ENCODE measurements at regions of chr12 and their contacts with region 1.

Region 1: GRCh38 chr12:9813821-9814809 is 13.2 kb upstream of the KLRF1 start:
- DNase-seq: peak; percentile 74 to 79 (median 79)
- H3K4me3 ChIP-seq: peak overlapping the region; percentile 36 to 77 (median 50)
- H3K4me3 Mint-ChIP-seq: peak overlapping the region; percentile 79 to 89
- H3K27ac ChIP-seq: peak overlapping the region; percentile 50
- H3K27ac Mint-ChIP-seq: peak overlapping the region; percentile 17 to 85 (median 73)
- H3K4me1 ChIP-seq: peaks cover 32 to 43% of the 10 kb centered on the region in 2 donors
- H3K4me1 Mint-ChIP-seq: peaks cover 34% of the 10 kb centered on the region
- H3K27me3 ChIP-seq: no peaks in the 10 kb centered on the region
- H3K27me3 Mint-ChIP-seq: peaks cover 0 to 4% (median 0%) of the 10 kb centered on the region in 3 donors
- CTCF ChIP-seq: peak; percentile 95

Region 2: GRCh38 chr12:9750276-9751203 is 63.6 kb before region 1 on chr12:
- intact Hi-C with region 1: loop called in 1 of 2 experiments (anchors 5 kb)
- DNase-seq: peak; percentile 58 to 78 (median 78)
- H3K4me3 ChIP-seq: peak overlapping the region in 2 of 3 experiments; percentile 11 to 45
- H3K4me3 Mint-ChIP-seq: peak overlapping the region; percentile 27 to 60
- H3K27ac ChIP-seq: no peak overlapping the region
- H3K27ac Mint-ChIP-seq: peak overlapping the region in 3 of 7 donors; percentile 27 to 70 (median 68)
- H3K4me1 ChIP-seq: peaks cover 4 to 13% of the 10 kb centered on the region in 2 donors
- H3K4me1 Mint-ChIP-seq: peaks cover 14% of the 10 kb centered on the region
- H3K27me3 ChIP-seq: no peaks in the 10 kb centered on the region
- H3K27me3 Mint-ChIP-seq: peaks cover 0 to 1% (median 0%) of the 10 kb centered on the region in 3 donors
- CTCF ChIP-seq: peak; percentile 94

Region 3: DNA sequence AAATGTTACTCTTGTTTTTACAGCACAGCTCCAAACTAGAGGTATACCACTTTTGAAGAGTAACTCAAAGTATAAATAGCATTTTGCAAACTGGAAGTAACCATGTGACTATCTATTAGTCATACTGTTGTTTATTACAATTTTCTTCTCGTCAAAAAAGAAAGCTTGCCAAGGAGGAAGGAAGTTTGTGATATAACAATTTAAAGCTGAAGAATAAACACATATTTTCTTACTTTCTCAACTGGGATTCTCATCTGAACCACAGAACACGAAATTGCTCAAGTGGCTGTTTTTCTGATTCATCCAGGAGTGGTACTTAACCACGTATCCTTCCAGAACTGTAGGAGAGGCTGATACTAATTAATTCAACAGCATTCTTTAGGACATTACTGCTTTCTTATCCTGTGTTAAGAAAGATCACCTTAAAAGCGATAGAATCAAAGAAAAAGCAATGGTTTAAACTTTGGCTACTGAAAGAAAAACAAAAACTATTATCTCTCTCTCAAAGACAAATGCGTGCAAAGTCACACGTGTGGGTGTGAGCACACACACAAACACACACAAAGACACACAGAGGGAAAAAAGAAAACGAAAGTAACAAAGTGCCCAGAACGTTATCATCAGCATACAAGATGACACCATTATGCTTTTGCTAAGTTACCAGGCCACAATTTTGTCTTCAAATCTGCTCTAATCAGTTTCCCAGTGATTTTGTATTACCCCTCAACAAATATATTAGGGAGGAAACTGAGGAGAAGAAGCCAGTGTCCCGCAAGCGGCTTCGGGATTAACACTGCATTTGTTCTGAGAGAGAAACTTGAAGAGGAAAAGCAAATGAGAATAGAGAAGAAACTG is 55.4 kb after region 1 on chr12 and contains the start of gene CLEC2B:
- intact Hi-C with region 1: loop called in 1 of 2 experiments (anchors 5 kb)
- DNase-seq: peak; percentile 74 to 85 (median 83)
- H3K4me3 ChIP-seq: peak within 1 kb of the TSS; percentile 81 to 100 (median 83)
- H3K4me3 Mint-ChIP-seq: peak within 1 kb of the TSS; percentile 83 to 91
- H3K27ac ChIP-seq: peak within 1 kb of the TSS; percentile 77 to 94
- H3K27ac Mint-ChIP-seq: peak within 1 kb of the TSS; percentile 95 to 99 (median 96)
- H3K4me1 ChIP-seq: peaks cover 17 to 28% of the 10 kb centered on the region in 2 donors
- H3K4me1 Mint-ChIP-seq: peaks cover 25% of the 10 kb centered on the region
- H3K27me3 ChIP-seq: no peaks in the 10 kb centered on the region
- H3K27me3 Mint-ChIP-seq: no peaks in the 10 kb centered on the region
- CTCF ChIP-seq: no peak
- polyA plus RNA-seq, gene CLEC2B: 52.1 to 80.3 (median 59.4) TPM

Region 4: GRCh38 chr12:9925708-9926393 is 111.7 kb after region 1 on chr12:
- intact Hi-C with region 1: loop called (anchors 5 to 10 kb)
- DNase-seq: peak in 2 of 3 donors; percentile 41 to 46
- H3K4me3 ChIP-seq: peak overlapping the region; percentile 25 to 67 (median 61)
- H3K4me3 Mint-ChIP-seq: peak overlapping the region; percentile 80 to 94
- H3K27ac ChIP-seq: peak overlapping the region in 1 of 2 donors; percentile 58
- H3K27ac Mint-ChIP-seq: peak overlapping the region in 5 of 7 donors; percentile 13 to 87 (median 44)
- H3K4me1 ChIP-seq: peaks cover 0 to 8% of the 10 kb centered on the region in 2 donors
- H3K4me1 Mint-ChIP-seq: peaks cover 18% of the 10 kb centered on the region
- H3K27me3 ChIP-seq: no peaks in the 10 kb centered on the region
- H3K27me3 Mint-ChIP-seq: peaks cover 0 to 1% (median 0%) of the 10 kb centered on the region in 3 donors
- CTCF ChIP-seq: peak; percentile 56

Region 5: DNA sequence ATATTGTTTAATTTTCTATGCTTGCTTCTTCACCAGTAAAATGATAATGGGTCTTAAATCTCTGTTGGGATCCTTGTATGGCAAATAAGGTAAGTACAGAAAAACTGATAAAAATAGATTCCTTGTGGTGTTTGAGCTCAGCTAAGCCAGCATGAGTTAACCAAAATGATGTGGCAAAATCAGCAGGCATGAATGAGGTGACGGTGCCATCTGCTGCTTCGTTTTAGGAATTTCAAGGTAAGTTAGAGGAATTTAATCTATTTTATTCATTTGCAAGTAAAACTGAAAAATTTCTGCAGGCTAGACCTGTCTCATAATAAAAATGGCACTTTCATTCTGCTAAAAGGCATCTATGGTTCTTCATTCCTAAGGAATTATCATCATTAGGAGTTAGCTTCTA is 325.9 kb after region 1 on chr12:
- intact Hi-C with region 1: loop called in 1 of 2 experiments (anchors 10 kb)
- DNase-seq: peak; percentile 72 to 81 (median 75)
- H3K4me3 ChIP-seq: no peak overlapping the region
- H3K4me3 Mint-ChIP-seq: no peak overlapping the region
- H3K27ac ChIP-seq: no peak overlapping the region
- H3K27ac Mint-ChIP-seq: peak overlapping the region; percentile 5 to 73 (median 49)
- H3K4me1 ChIP-seq: peaks cover 6 to 7% of the 10 kb centered on the region in 2 donors
- H3K4me1 Mint-ChIP-seq: peaks cover 14% of the 10 kb centered on the region
- H3K27me3 ChIP-seq: no peaks in the 10 kb centered on the region
- H3K27me3 Mint-ChIP-seq: peaks cover 2 to 5% (median 3%) of the 10 kb centered on the region in 3 donors
- CTCF ChIP-seq: peak; percentile 82

Measured in CD14-positive monocyte (primary cell).